Activated naive CD4-positive, alpha-beta T cell treated with anti-CD3 and anti-CD28 coated beads for 36 hours (primary cell): ENCODE measurements at regions of chr2 and their contacts with region 1.

Region 1: GRCh38 chr2:88691339-88692183 is at the start of gene RPIA:
- DNase-seq: peak; percentile 99
- H3K4me3 Mint-ChIP-seq: peak within 1 kb of the TSS; percentile 93
- H3K27ac Mint-ChIP-seq: peak within 1 kb of the TSS; percentile 91
- H3K4me1 Mint-ChIP-seq: peaks cover 50% of the 10 kb centered on the region
- H3K27me3 Mint-ChIP-seq: no peaks in the 10 kb centered on the region
- total RNA-seq, gene RPIA: 67.3 to 70.0 TPM

Region 2: GRCh38 chr2:88600038-88600465 is 91.5 kb before region 1 on chr2:
- CTCF ChIA-PET with region 1: no interaction called
- intact Hi-C with region 1: loop called (anchors 1 kb)
- DNase-seq: peak; percentile 67
- H3K4me3 Mint-ChIP-seq: no peak overlapping the region
- H3K27ac Mint-ChIP-seq: peak overlapping the region; percentile 16
- H3K4me1 Mint-ChIP-seq: peaks cover 35% of the 10 kb centered on the region
- H3K27me3 Mint-ChIP-seq: no peaks in the 10 kb centered on the region

Region 3: GRCh38 chr2:88753833-88754584 is 62.4 kb after region 1 on chr2:
- CTCF ChIA-PET with region 1: interaction called, 3 read pairs
- intact Hi-C with region 1: loop called (anchors 1 kb)
- DNase-seq: peak; percentile 79
- H3K4me3 Mint-ChIP-seq: no peak overlapping the region
- H3K27ac Mint-ChIP-seq: peak overlapping the region; percentile 98
- H3K4me1 Mint-ChIP-seq: peaks cover 57% of the 10 kb centered on the region
- H3K27me3 Mint-ChIP-seq: no peaks in the 10 kb centered on the region

Region 4: GRCh38 chr2:88765154-88765900 is 73.8 kb after region 1 on chr2:
- CTCF ChIA-PET with region 1: no interaction called
- intact Hi-C with region 1: loop called (anchors 1 kb)
- DNase-seq: peak; percentile 73
- H3K4me3 Mint-ChIP-seq: peak overlapping the region; percentile 77
- H3K27ac Mint-ChIP-seq: peak overlapping the region; percentile 27
- H3K4me1 Mint-ChIP-seq: peaks cover 11% of the 10 kb centered on the region
- H3K27me3 Mint-ChIP-seq: peaks cover 13% of the 10 kb centered on the region